Activated CD4-positive, alpha-beta T cell treated with anti-CD3 and anti-CD28 coated beads, Interleukin-2, amount 10 ng/mL, durations not matched to agents 24 days and 14 days (primary cell): ENCODE measurements at regions of chr13 and their contacts with region 1.

Region 1: GRCh38 chr13:97018029-97018831 is 24.0 kb upstream of the OXGR1 start:
- DNase-seq: peak; percentile 79
- H3K4me3 Mint-ChIP-seq: no peak overlapping the region
- H3K27ac Mint-ChIP-seq: no peak overlapping the region
- H3K4me1 Mint-ChIP-seq: peaks cover 4% of the 10 kb centered on the region
- H3K27me3 Mint-ChIP-seq: peaks cover 35% of the 10 kb centered on the region

Region 2: GRCh38 chr13:97359181-97360057 is 341.2 kb after region 1 on chr13:
- intact Hi-C with region 1: loop called (anchors 5 kb)
- DNase-seq: peak; percentile 83
- H3K4me3 Mint-ChIP-seq: no peak overlapping the region
- H3K27ac Mint-ChIP-seq: no peak overlapping the region
- H3K4me1 Mint-ChIP-seq: no peaks in the 10 kb centered on the region
- H3K27me3 Mint-ChIP-seq: no peaks in the 10 kb centered on the region

Region 3: GRCh38 chr13:97403893-97404750 is 385.9 kb after region 1 on chr13:
- intact Hi-C with region 1: no loop called
- DNase-seq: no peak
- H3K4me3 Mint-ChIP-seq: no peak overlapping the region
- H3K27ac Mint-ChIP-seq: no peak overlapping the region
- H3K4me1 Mint-ChIP-seq: no peaks in the 10 kb centered on the region
- H3K27me3 Mint-ChIP-seq: peaks cover 15% of the 10 kb centered on the region

Region 4: GRCh38 chr13:97726664-97727280 is 708.5 kb after region 1 on chr13:
- intact Hi-C with region 1: no loop called
- DNase-seq: no peak
- H3K4me3 Mint-ChIP-seq: no peak overlapping the region
- H3K27ac Mint-ChIP-seq: no peak overlapping the region
- H3K4me1 Mint-ChIP-seq: no peaks in the 10 kb centered on the region
- H3K27me3 Mint-ChIP-seq: peaks cover 2% of the 10 kb centered on the region

Region 5: DNA sequence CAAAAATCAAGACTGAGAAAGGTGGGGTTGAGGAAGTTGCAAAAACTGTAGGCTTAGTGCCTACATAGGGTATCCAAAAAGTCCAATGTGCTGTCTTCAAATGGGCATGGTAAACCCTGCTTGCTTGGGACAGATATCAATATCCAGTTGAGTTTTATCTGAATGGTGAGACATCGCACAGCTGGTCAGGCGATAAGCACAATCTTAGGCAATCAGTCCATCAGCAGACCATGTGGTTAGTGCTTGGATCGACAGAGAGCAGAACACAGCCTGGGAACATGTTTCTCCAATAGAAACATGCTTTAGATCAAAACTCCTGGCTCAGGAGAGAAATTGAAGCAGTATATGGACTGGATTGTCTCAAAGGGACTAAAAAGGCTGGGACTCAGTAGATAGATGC is 784.0 kb after region 1 on chr13:
- intact Hi-C with region 1: loop called (anchors 5 kb)
- DNase-seq: no peak
- H3K4me3 Mint-ChIP-seq: no peak overlapping the region
- H3K27ac Mint-ChIP-seq: no peak overlapping the region
- H3K4me1 Mint-ChIP-seq: no peaks in the 10 kb centered on the region
- H3K27me3 Mint-ChIP-seq: no peaks in the 10 kb centered on the region